ENCODE measurements at regions of chrX and their contacts with region 1.

Region 1: DNA sequence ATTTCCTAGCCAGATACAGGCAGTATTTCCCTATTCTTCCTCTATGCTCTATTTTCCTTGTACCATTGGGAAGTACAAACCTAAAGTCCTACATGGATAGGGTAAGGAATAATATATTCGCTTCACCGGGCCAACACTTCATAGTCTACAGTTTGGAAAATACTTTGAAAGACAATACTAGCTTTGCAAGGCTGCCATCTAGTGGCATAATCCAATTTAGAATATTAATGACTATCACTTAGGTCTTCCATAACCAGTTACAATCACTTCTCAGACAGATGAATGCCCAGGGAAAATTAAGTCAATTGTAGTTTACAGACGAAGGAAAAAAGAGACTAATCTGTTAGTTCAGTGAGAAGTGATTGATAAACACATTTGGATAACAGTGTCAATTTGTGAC is 141.0 kb upstream of the FAM47C start:
- DNase-seq: peak; percentile 2
- ATAC-seq: peak; percentile 55; the same call in 2 of the 3 replicates
- H3K4me3 ChIP-seq: no peak overlapping the region
- H3K27ac ChIP-seq: no peak overlapping the region
- H3K4me1 ChIP-seq: no peaks in the 10 kb centered on the region
- H3K27me3 ChIP-seq: no peaks in the 10 kb centered on the region
- CTCF ChIP-seq: peak; percentile 54
- EP300 ChIP-seq: no peak
- POLR2A ChIP-seq: no peak
- RAD21 ChIP-seq: no peak

Region 2: DNA sequence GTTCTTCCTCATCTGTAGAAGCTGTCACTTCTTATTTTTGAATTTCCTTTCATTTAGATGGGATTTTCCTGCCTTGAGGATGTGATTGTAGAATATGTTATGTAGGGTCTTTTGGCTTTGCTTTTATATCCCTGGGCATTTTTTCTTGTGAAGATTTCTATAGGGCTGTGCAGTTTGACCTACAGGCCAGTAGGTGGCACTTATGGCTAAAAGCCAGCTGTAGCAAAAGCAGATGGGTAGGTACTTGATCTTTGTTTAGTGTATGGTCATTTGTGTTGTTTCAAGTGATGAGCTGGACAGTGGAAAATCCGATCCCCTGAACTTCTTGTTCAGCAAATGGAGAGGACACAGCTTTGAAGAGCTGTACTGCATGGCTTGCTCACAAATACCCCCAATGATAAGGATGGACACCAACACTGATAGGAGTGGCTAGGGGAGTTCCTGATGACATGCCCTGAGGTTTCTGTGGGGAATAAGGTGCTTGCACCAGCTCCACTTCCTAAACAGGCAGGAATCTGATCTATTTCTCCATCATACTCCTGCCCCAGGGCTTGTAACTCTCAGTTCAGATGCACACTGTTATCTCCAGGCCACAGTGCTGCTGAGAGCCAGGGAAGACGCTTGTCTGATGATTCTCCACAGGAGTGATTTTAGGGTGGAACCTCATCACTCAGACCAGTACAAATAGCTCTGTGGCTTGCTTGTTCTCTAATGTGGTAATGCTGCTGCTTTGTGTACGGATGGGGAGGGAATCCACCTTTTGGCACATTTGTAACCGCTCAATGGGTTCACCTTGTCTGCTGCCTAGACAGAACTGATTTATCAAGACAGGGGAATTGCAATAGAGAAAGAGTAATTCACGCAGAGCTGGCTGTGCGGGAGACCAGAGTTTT is 1486.1 kb before region 1 on chrX:
- CTCF ChIA-PET with region 1: no interaction called
- POLR2A ChIA-PET with region 1: no interaction called
- in situ Hi-C with region 1: no loop called
- intact Hi-C with region 1: loop called (anchors 5 kb)
- DNase-seq: peak; percentile 0
- ATAC-seq: no peak
- H3K4me3 ChIP-seq: no peak overlapping the region
- H3K27ac ChIP-seq: no peak overlapping the region
- H3K4me1 ChIP-seq: no peaks in the 10 kb centered on the region
- H3K27me3 ChIP-seq: no peaks in the 10 kb centered on the region
- CTCF ChIP-seq: peak; percentile 40; the same call in 1 of the 2 replicates
- EP300 ChIP-seq: no peak
- POLR2A ChIP-seq: no peak
- RAD21 ChIP-seq: no peak

Region 3: GRCh38 chrX:35625714-35626113 is 1241.4 kb before region 1 on chrX:
- CTCF ChIA-PET with region 1: no interaction called
- POLR2A ChIA-PET with region 1: no interaction called
- in situ Hi-C with region 1: no loop called
- intact Hi-C with region 1: no loop called
- DNase-seq: no peak
- ATAC-seq: no peak
- H3K4me3 ChIP-seq: no peak overlapping the region
- H3K27ac ChIP-seq: no peak overlapping the region
- H3K4me1 ChIP-seq: no peaks in the 10 kb centered on the region
- H3K27me3 ChIP-seq: no peaks in the 10 kb centered on the region
- CTCF ChIP-seq: no peak
- EP300 ChIP-seq: no peak
- POLR2A ChIP-seq: no peak
- RAD21 ChIP-seq: no peak

Region 4: DNA sequence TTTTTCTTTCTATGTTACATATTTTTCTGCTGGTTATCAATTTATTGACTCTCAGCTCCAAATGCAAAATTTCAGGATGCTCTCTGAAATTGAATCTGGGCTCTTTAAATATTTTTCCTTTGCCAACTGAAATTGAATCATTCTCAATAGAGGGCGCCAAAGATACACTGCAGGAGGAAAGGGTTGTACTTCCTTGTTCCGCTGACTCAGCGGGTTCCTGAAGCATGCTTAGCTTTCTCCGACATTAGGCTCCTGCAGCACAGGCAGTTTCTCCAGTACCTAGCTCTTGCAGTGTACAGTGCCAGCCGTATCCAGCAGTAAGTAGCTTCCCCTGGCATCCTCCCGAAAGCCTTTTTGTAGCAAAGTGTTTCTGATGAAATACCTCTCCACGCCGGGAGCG is 976.4 kb before region 1 on chrX:
- CTCF ChIA-PET with region 1: interaction called, 7 read pairs
- POLR2A ChIA-PET with region 1: no interaction called
- in situ Hi-C with region 1: loop called (anchors 25 kb)
- intact Hi-C with region 1: no loop called
- DNase-seq: peak; percentile 46
- ATAC-seq: peak; percentile 49; the same call in 2 of the 3 replicates
- H3K4me3 ChIP-seq: no peak overlapping the region
- H3K27ac ChIP-seq: no peak overlapping the region
- H3K4me1 ChIP-seq: no peaks in the 10 kb centered on the region
- H3K27me3 ChIP-seq: no peaks in the 10 kb centered on the region
- CTCF ChIP-seq: peak; percentile 61
- EP300 ChIP-seq: no peak
- POLR2A ChIP-seq: no peak
- RAD21 ChIP-seq: no peak

Region 5: DNA sequence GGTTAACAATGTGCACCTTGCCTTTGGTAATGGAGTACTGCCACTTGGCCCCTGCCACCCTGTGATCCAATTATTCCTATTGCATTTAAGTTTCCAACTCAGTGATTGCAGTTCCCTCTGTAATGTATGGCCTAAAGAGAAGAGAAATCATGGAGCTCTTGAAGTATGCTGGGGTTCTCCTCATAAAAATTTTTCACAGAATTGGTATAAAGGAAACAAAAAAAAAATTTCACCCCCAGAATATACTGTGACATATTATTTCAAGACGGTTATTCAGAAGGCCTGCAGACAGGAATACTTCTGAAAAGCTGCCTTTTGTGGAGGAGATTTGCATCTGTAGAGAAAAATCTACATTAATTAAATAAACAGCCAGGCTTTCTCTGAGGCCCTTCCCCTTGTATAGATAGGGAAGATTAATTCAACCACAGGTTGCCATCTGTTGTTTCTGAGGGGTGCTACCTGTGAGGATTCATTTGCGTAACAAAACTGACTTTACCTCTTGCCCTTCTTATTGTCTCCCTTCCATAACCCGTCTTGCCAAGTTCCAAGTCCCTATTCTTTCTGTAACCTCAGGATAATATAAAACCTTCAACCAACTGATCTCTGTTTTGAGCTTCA is 609.5 kb after region 1 on chrX:
- CTCF ChIA-PET with region 1: no interaction called
- POLR2A ChIA-PET with region 1: no interaction called
- in situ Hi-C with region 1: no loop called
- intact Hi-C with region 1: no loop called
- DNase-seq: no peak
- ATAC-seq: no peak
- H3K4me3 ChIP-seq: no peak overlapping the region
- H3K27ac ChIP-seq: no peak overlapping the region
- H3K4me1 ChIP-seq: peaks cover 18% of the 10 kb centered on the region
- H3K27me3 ChIP-seq: no peaks in the 10 kb centered on the region
- CTCF ChIP-seq: no peak
- EP300 ChIP-seq: no peak
- POLR2A ChIP-seq: no peak
- RAD21 ChIP-seq: no peak